HEK293T (cell line): ENCODE measurements at regions of chr14 and their contacts with region 1.

Region 1: GRCh38 chr14:24431569-24432258 is 2.0 kb downstream of the KHNYN start:
- DNase-seq: peak; percentile 86

Region 2: GRCh38 chr14:24321212-24321975 is 110.3 kb before region 1 on chr14:
- CTCF ChIA-PET with region 1: interaction called, 145 read pairs
- POLR2A ChIA-PET with region 1: interaction called, 5 read pairs
- DNase-seq: no peak

Region 3: GRCh38 chr14:24351517-24351916 is 80.2 kb before region 1 on chr14:
- CTCF ChIA-PET with region 1: interaction called, 17 read pairs
- POLR2A ChIA-PET with region 1: interaction called, 13 read pairs
- DNase-seq: no peak

Region 4: DNA sequence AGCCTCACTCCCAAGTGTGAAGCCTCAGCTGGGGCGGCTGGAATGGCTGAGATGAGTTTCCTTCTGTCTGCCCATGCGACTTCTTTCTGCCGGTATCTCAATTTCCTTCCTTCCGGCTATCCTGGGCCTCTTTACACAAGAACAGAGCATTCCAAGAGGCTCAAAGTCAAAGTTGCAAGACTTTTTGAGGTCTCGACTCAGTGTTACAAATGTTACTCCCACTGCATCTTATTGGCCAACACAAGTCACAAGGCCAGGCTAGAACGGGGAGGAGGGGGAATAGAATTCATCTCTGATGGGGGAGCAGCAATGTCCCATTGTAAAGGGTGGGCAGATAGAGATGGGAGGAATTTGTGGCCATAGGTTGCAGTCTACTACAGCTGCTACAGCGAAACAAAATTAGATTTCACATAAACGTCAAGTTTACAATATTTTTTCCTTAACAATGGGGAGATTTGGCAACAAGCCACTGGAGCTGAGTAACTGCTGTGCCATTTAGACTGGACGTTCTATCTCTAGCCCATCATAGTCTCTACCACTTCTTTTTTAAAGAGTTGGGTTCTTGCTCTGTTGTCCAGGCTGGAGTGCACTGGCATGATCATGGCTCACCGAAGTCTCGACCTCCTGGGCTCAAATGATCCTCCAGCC is 42.4 kb before region 1 on chr14:
- CTCF ChIA-PET with region 1: interaction called, 4 read pairs
- POLR2A ChIA-PET with region 1: interaction called, 11 read pairs
- DNase-seq: no peak

Region 5: GRCh38 chr14:24418492-24418873 is 13.2 kb before region 1 on chr14:
- CTCF ChIA-PET with region 1: interaction called, 8 read pairs
- POLR2A ChIA-PET with region 1: interaction called, 32 read pairs
- DNase-seq: no peak

Region 6: DNA sequence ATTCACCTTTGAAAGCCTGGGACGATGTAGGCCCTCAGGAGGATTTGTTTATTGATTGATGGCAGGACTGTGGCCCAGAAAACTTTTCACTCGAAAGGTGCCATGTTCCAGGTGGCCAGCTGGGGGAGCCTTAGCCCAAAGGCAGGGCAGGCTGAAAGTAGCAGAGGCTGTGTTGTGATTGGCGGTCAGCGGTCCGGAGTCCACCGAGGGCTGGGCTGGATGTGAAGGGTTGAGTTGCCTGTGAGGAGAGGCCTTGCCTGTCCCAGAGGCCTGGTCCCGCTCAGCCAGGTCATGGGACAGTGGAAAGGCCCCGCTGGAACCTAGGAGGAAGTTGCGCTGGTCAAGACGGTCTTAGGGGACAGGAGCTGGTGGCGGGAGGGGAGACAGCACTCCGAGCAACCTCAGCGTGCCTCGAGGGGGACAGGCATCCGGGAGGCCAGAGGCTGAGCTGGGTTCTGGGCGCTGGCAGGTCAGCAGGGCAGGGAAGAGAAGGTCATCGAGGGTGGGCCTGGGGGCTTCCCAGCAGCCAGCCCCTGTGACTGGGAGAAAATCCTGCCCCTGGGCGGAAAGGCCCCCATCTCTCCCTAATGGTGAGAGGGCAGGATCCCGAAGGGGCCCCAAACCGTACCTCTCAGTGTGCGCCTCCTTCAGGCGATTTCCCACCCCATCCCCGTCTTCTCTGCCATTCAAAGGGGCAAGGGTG is 50.1 kb after region 1 on chr14:
- CTCF ChIA-PET with region 1: no interaction called
- POLR2A ChIA-PET with region 1: no interaction called
- DNase-seq: peak; percentile 84

Region 7: DNA sequence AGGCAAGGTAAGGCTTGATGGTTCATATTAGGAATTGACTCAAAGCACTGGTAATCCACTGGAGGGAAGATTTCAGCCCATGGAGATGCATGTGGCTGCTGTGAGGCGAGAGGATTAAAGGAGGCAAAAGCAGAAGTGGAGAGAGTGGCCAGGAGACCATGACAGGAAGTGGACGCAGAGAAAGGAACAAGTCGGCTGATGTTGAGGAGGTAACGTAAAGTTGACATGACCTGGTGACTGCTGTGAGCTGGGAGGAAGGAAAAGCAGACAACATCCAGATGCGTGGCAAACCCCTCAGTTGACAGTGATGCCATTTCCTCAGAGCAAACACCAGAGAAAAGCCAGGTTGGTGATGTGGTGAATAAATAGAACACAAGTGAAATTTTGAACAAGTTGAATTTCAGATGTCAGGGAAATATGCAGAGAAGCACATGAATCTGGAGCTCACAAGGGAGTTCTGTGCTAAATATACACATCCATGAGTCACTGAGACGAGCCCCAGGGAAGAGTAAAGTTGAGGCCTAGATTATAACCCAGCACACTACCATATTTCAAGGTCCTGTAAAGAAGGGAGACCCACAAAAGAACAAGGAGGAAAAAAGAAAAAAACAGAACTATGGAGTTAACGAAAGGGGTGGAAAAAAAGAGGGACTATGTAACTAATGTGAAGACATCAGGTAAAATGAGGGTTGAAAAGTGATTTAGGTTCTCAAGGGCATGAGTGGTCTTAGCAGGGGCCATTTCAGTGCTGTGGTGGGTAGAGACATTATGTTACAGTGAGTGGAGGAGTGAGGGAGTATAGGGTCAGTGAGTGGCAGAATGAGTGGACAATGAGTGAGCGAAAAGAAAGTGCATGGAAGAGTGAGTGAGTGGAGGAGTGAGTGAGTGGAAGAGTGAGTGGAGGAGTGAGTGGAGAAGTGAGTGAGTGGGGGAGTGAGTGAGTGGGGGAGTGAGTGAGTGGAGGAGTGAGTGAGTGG is 263.8 kb after region 1 on chr14:
- CTCF ChIA-PET with region 1: no interaction called
- POLR2A ChIA-PET with region 1: no interaction called
- DNase-seq: no peak